ENCODE measurements at regions of chr12 and their contacts with region 1.

Region 1: GRCh38 chr12:89657066-89657465 is 51.6 kb downstream of the ATP2B1 start:
- DNase-seq: peak; percentile 52
- ATAC-seq: peak; percentile 63
- H3K4me3 ChIP-seq: peak overlapping the region in 4 of 5 experiments; percentile 26 to 34 (median 30)
- H3K4me3 Mint-ChIP-seq: peak overlapping the region; percentile 83
- H3K27ac ChIP-seq: peak overlapping the region in 1 of 2 donors; percentile 44
- H3K27ac Mint-ChIP-seq: peak overlapping the region; percentile 80
- H3K4me1 ChIP-seq: peaks cover 24 to 49% of the 10 kb centered on the region in 2 donors
- H3K4me1 Mint-ChIP-seq: peaks cover 64% of the 10 kb centered on the region
- H3K27me3 ChIP-seq: no peaks in the 10 kb centered on the region
- H3K27me3 Mint-ChIP-seq: no peaks in the 10 kb centered on the region
- CTCF ChIP-seq: no peak

Region 2: DNA sequence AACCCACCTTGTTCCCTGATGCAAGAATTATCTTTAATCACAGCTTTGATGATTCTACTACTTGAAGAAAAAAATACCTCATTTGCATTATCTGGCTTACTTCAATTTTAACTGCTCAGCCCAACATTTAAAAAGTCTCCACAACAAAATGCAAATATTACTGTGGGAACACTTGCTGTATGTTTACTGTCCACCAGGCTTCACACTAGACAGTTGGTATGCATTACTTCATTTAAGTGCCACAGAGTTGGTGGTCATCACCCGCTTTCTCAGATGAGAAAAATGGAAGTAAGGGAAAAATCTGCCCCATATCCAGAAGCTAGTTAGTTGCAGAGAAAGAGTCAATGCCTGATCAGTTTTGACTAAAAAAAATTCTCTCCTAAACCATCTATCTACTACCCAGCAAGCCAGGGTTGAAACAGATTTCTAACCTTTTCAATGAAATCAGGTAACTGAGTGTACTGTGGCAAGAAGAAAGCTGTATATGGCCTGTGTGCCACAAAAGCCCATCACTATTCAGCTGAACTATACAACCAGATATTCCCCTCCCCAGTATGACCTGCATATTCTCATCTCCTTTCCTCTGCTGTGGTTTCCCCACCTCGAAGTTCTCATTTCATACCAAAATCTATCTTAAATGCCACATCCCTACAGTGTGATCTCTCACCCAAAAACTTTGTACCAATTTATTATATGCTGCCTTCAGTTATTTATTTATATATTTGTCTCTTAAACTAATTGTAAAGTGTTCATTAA is 38.8 kb before region 1 on chr12:
- CTCF ChIA-PET with region 1: no interaction called
- POLR2A ChIA-PET with region 1: no interaction called
- intact Hi-C with region 1: no loop called
- DNase-seq: no peak
- ATAC-seq: no peak
- H3K4me3 ChIP-seq: no peak overlapping the region
- H3K4me3 Mint-ChIP-seq: no peak overlapping the region
- H3K27ac ChIP-seq: no peak overlapping the region
- H3K27ac Mint-ChIP-seq: no peak overlapping the region
- H3K4me1 ChIP-seq: no peaks in the 10 kb centered on the region
- H3K4me1 Mint-ChIP-seq: no peaks in the 10 kb centered on the region
- H3K27me3 ChIP-seq: no peaks in the 10 kb centered on the region
- H3K27me3 Mint-ChIP-seq: no peaks in the 10 kb centered on the region
- CTCF ChIP-seq: no peak

Region 3: DNA sequence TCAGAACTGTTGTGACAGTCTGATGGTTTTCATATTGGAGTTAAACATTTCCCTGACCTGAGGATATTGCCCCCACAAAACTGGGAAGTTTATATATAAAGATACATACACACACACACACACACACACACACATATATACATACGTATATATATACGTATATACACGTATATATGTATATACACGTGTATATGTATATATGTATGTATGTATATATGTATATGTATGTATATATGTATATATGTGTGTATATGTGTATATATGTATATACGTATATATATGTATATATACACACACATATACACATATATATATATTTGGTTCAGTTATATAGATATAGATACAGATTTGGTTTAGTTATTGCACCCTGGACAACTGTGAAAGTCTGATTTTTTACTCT is 14.1 kb before region 1 on chr12:
- CTCF ChIA-PET with region 1: no interaction called
- POLR2A ChIA-PET with region 1: no interaction called
- intact Hi-C with region 1: loop called (anchors 2 kb)
- DNase-seq: no peak
- ATAC-seq: no peak
- H3K4me3 ChIP-seq: no peak overlapping the region
- H3K4me3 Mint-ChIP-seq: no peak overlapping the region
- H3K27ac ChIP-seq: no peak overlapping the region
- H3K27ac Mint-ChIP-seq: no peak overlapping the region
- H3K4me1 ChIP-seq: peaks cover 4 to 14% of the 10 kb centered on the region in 2 donors
- H3K4me1 Mint-ChIP-seq: peaks cover 46% of the 10 kb centered on the region
- H3K27me3 ChIP-seq: no peaks in the 10 kb centered on the region
- H3K27me3 Mint-ChIP-seq: no peaks in the 10 kb centered on the region
- CTCF ChIP-seq: no peak

Region 4: GRCh38 chr12:89671469-89671868 is 14.4 kb after region 1 on chr12:
- CTCF ChIA-PET with region 1: interaction called, 3 read pairs
- POLR2A ChIA-PET with region 1: interaction called, 3 read pairs
- intact Hi-C with region 1: loop called (anchors 2 kb)
- DNase-seq: no peak
- ATAC-seq: no peak
- H3K4me3 ChIP-seq: no peak overlapping the region
- H3K4me3 Mint-ChIP-seq: peak overlapping the region; percentile 18
- H3K27ac ChIP-seq: peak overlapping the region in 1 of 2 donors; percentile 50
- H3K27ac Mint-ChIP-seq: peak overlapping the region; percentile 47
- H3K4me1 ChIP-seq: peaks cover 38 to 80% of the 10 kb centered on the region in 2 donors
- H3K4me1 Mint-ChIP-seq: peaks cover 87% of the 10 kb centered on the region
- H3K27me3 ChIP-seq: no peaks in the 10 kb centered on the region
- H3K27me3 Mint-ChIP-seq: no peaks in the 10 kb centered on the region
- CTCF ChIP-seq: no peak

Region 5: GRCh38 chr12:89685363-89685972 is 28.4 kb after region 1 on chr12:
- CTCF ChIA-PET with region 1: no interaction called
- POLR2A ChIA-PET with region 1: no interaction called
- intact Hi-C with region 1: no loop called
- DNase-seq: no peak
- ATAC-seq: no peak
- H3K4me3 ChIP-seq: no peak overlapping the region
- H3K4me3 Mint-ChIP-seq: peak overlapping the region; percentile 16
- H3K27ac ChIP-seq: peak overlapping the region in 1 of 2 donors; percentile 7
- H3K27ac Mint-ChIP-seq: peak overlapping the region; percentile 42
- H3K4me1 ChIP-seq: peaks cover 6 to 29% of the 10 kb centered on the region in 2 donors
- H3K4me1 Mint-ChIP-seq: peaks cover 56% of the 10 kb centered on the region
- H3K27me3 ChIP-seq: no peaks in the 10 kb centered on the region
- H3K27me3 Mint-ChIP-seq: no peaks in the 10 kb centered on the region
- CTCF ChIP-seq: no peak

Measured in B cell (primary cell).